ENCODE measurements at regions of chr1 and their contacts with region 1.

Region 1: DNA sequence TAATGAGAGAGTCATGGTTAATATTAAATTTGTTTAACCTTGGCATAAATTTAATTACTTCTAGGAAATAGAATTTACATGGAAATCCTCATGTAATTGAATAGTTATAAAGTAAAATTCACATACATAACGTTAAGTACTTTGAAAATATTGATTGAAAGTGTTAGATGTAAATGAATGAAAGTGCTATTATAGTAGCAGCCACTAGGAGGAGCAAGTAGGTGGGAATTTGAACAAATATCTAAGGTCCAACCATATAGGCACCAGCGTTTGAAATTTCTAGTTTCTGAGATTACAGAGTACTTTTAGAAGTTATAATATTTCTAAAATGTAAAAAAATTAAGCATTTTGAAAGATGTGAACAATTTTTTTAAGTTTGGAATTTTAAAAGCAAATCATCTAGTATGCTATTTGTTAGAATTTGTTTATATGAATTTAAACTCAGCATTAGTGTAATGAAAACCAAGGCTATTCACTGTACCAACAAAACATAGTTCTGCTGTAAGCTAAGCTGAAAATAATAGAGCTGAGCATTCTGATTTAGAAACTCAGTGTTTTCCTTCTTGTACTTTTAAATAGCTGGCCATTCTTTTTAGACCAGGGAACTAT is 3.3 kb downstream of the B3GALT2 start:
- DNase-seq: no peak
- H3K4me3 Mint-ChIP-seq: no peak overlapping the region
- H3K27ac Mint-ChIP-seq: no peak overlapping the region
- H3K4me1 Mint-ChIP-seq: peaks cover 35% of the 10 kb centered on the region
- H3K27me3 Mint-ChIP-seq: no peaks in the 10 kb centered on the region

Region 2: DNA sequence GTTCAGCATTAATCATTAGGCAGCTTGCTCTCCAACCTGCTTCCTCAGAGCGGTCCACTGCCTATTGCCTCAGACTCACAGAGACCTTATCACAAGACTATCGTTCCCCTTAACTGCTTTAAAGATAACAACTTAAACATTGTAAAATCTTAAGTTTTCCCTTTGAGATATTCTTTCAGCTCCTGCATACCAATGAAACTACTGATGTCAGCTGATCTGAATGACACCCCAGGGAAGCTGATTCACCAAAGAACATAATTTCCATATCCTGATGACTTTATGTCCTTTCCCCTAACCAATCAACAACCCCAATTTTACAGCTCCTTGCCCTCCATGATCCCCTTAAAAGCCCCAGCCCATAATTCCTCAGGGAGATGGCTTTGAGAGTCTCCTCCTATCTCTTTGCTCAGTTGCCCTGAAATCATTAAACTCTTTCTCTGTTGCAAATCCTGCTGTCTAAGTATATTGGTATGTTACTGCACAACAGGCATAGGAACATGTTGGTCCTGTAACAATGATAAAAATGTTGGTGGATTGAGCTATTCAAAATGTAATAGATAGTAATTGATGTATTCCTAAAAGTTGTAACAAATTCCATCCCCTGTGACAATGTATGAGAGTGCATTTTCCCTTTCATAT is 1646.2 kb before region 1 on chr1:
- intact Hi-C with region 1: no loop called
- DNase-seq: no peak
- H3K4me3 Mint-ChIP-seq: no peak overlapping the region
- H3K27ac Mint-ChIP-seq: no peak overlapping the region
- H3K4me1 Mint-ChIP-seq: no peaks in the 10 kb centered on the region
- H3K27me3 Mint-ChIP-seq: no peaks in the 10 kb centered on the region

Region 3: DNA sequence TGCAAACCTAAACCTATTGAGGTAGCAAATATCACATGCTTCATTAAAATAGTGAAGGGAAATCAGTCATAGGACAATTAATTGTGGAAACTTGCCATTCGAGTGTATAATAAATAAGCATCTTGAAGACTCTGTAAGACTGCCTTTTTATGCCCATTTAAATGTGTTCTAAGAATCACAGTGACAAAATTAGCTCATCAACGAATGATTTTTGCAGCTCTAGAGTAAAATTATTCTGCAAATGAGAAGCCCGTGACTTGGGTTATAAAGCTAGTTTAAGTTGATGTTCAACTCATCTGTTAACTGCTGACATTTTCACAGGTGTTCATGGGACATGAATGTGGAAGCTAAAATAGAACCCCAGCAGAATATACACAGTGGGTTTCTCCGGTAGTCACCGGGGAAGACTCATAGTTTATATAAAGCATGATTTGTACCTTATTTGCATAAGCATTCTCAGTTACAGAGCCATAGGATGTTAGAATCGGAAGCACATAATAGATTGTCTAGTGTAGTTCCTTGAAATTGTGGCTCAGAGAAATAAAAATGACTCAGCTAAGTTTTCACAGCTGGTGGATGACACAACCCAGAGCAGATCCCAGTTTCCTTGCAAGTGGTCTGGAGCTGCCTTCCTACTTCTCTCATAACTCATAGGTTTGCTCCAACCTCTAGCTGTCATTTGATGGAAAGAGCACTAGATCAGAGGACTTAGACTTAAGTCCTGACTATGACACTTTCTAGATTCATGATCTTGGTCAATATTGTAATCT is 231.2 kb before region 1 on chr1:
- intact Hi-C with region 1: no loop called
- DNase-seq: no peak
- H3K4me3 Mint-ChIP-seq: no peak overlapping the region
- H3K27ac Mint-ChIP-seq: no peak overlapping the region
- H3K4me1 Mint-ChIP-seq: no peaks in the 10 kb centered on the region
- H3K27me3 Mint-ChIP-seq: no peaks in the 10 kb centered on the region

Region 4: DNA sequence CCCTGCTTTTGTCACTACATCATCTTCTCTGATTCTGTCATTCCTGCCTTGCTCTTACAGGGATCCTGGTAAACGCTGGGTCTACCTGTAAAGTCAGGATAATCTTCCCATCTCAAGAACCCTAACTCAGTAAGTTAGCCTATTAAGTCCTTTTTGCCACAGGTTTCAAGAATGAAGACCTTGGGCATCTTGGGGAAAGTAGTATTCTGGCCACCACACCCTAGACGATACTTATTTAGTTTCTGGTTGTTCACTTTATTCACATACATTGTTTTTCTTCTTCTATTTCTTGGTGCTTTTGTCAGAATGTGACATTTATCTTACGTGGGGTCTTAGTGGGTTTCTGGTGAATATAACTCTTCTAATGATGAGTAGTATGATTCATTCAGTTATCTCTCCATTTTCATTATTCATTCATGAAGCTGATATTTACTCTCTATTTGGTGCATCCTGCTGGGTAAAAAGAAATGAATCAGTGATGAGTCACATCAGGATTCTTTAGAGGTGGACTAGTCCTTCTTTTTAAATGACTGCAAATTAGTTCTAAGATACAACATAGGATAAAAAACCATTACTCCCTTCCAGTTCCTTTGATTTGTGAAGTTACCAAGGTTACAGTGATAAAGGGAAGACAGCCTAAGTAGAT is 517.7 kb after region 1 on chr1:
- intact Hi-C with region 1: loop called (anchors 10 kb)
- DNase-seq: no peak
- H3K4me3 Mint-ChIP-seq: no peak overlapping the region
- H3K27ac Mint-ChIP-seq: peak overlapping the region; percentile 20
- H3K4me1 Mint-ChIP-seq: peaks cover 15% of the 10 kb centered on the region
- H3K27me3 Mint-ChIP-seq: no peaks in the 10 kb centered on the region

Measured in activated T-helper 1 cell treated with anti-CD3 and anti-CD28 coated beads, Interleukin-12 subunit alpha, Interleukin-12 subunit beta, Interleukin-2, Interleukin-4 antibody, amounts not matched to agents 30 ng/mL and 10 ng/mL and 1 ng/mL, durations not matched to agents 14 hours and 24 hours and 36 hours (primary cell).